HEK293 (cell line): ENCODE measurements at regions of chr15 and their contacts with region 1.

Region 1: DNA sequence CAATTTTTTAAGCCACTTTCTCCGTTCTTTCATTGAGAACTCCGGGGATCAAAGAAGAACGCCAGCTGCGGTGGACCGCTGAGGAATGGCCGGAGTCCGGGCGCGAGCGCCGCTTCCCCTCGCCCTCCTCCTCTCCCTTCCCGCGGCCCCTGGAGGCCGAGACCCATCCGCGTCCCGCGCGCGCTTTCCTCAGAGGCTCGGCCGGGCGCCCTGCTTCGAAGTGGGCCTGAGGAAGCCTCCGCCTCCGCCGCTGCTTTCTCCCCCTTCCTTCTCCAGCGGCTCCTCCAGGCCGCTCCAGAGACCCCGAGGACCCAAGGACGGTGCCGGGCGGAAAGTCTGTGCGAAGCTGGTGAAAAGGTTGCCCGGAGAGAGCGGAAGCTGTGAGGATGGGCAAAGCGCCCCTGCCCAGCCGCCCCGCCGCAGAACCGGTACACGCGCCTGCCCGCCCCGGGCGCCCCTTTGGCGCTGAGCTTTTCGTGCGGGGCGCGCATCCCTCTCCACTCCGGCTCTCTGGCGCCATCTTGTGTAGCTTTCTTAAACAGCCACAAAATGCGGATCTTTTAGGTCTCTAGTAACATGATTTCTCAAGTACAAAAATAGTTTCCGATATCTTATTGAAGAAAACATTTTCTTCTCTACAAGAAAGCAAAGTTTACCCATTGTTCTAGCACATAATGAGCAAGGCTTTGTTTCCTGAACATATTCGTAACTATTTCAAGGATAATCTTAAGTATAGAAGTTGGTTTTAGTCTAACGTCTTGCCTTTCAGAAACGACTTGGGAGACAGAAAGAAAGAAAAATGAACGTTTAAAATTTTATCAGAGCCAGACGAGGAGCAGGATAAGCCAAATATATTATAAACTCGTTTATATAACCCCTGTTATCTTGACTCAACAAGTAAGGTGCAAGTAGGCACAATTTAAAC is 59.2 kb upstream of the FAM174B start:
- H3K4me3 ChIP-seq: peak overlapping the region; percentile 58
- H3K27ac ChIP-seq: peak overlapping the region; percentile 70
- H3K4me1 ChIP-seq: no peaks in the 10 kb centered on the region
- CTCF ChIP-seq: peak; percentile 91

Region 2: GRCh38 chr15:92097474-92098178 is 617.1 kb before region 1 on chr15:
- CTCF ChIA-PET with region 1: interaction called, 27 read pairs
- POLR2A ChIA-PET with region 1: no interaction called
- H3K4me3 ChIP-seq: no peak overlapping the region
- H3K27ac ChIP-seq: no peak overlapping the region
- H3K4me1 ChIP-seq: no peaks in the 10 kb centered on the region
- CTCF ChIP-seq: peak; percentile 73

Region 3: GRCh38 chr15:92104065-92104464 is 610.7 kb before region 1 on chr15:
- CTCF ChIA-PET with region 1: interaction called, 10 read pairs
- POLR2A ChIA-PET with region 1: no interaction called
- H3K4me3 ChIP-seq: no peak overlapping the region
- H3K27ac ChIP-seq: no peak overlapping the region
- H3K4me1 ChIP-seq: peaks cover 6% of the 10 kb centered on the region
- CTCF ChIP-seq: no peak

Region 4: DNA sequence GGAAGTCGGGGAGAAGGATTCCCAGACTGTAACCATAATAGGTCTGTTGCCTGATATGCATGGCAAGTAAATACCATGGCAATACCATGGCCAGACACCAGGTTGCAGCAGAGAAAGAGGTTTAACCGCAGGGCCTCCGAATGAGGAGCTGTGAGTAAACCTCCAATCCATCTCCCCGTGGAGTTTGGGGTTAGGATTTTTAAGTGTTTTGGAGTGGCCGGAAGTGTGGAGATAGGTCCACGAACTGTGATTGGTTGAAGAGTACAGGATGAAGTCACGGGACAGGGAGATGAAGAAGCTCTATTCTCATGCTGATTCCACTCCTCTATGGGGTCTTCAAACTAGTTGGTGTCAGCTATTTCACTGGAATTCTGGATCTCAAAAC is 193.1 kb before region 1 on chr15:
- CTCF ChIA-PET with region 1: interaction called, 23 read pairs
- POLR2A ChIA-PET with region 1: interaction called, 9 read pairs
- H3K4me3 ChIP-seq: no peak overlapping the region
- H3K27ac ChIP-seq: no peak overlapping the region
- H3K4me1 ChIP-seq: no peaks in the 10 kb centered on the region; the same call in 1 of the 2 replicates
- CTCF ChIP-seq: peak; percentile 57